Natural killer cell (primary cell): ENCODE measurements at regions of chr10 and their contacts with region 1.

Region 1: DNA sequence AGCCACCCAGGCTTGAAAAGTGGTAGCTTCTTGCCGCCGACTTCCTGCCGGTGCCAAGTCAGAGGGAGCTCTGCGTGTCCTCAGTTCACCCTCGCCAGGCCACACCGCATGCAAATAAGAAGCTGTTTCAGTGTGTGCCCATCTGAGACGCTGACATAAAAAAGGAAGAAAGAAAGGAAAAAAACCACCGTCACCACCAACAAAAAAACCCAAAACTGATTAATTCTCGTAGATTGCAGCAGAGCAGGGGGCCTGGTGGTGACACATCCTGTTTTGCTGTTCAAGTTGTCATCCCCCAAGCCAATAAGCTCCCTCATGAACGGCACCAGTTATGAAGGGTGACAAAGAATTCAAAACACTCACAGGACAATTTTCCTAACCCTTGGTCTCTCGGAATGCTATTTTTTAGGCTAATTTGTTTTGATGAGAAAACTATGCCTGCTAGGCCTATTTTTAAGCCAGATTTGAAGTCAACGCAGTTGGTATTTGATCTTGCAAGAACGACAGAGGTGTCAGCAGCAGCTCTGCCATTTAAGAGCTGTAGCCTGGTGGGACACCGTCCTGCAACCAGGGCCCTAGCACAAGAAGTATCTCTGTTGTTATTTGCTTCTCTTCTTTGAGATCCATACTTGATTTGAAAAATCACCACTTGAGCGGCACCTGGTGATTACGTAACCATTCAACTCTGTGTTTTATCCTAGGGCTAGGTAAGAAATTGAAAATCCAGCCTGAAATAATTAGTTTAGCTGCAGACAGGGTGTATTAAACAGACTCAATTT is 145.6 kb downstream of the PFKFB3 start:
- DNase-seq: peak; percentile 55 to 95
- ATAC-seq: peak; percentile 88 to 92 (median 90)
- H3K4me3 ChIP-seq: no peak overlapping the region
- H3K4me3 Mint-ChIP-seq: peak overlapping the region; percentile 84
- H3K27ac ChIP-seq: peak overlapping the region; percentile 78
- H3K27ac Mint-ChIP-seq: peak overlapping the region; percentile 92 to 93
- H3K4me1 ChIP-seq: peaks cover 23% of the 10 kb centered on the region
- H3K4me1 Mint-ChIP-seq: peaks cover 27 to 32% of the 10 kb centered on the region in 2 donors
- H3K27me3 ChIP-seq: no peaks in the 10 kb centered on the region
- H3K27me3 Mint-ChIP-seq: no peaks in the 10 kb centered on the region
- CTCF ChIP-seq: no peak

Region 2: DNA sequence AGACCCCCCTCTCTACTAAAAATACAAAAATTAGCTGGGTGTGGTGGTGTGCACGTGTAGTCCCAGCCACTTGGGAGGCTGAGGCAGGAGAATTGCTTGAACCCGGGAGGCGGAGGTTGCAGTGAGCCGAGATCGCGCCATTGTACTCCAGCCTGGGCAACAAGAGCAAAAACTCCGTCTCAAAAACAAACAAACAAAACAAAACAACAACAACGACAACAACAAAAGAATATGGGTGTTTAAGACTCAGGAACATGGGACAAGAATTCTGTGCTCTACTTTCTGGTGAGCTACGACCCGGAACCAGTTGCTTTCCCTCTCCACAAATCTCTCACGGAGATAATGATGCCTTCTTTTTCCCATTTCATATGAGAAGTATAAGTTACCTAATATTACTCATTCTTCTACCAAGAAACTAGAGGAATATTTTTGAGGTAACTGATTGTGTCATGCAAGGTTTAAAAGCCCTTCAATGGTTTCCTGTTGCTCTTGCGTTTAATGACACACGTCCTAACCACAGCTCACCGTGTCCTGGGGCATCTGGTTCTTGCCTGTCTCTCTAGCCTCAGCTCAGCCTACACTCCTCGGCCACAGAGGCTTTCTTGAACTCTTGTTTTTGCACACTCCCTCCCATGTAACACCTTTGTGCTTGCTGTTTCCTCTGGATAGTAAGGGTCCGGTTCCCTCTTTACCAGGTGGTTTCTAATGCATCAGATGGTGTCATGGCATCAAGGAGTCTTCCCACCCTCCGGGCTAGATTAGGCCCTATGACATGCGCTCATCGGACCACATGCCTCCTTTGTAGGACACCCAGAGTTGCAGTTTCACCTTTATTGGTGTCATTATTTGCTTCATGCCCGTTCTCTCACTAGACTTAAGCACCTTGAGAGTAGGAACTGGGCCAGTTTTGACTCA is 78.1 kb before region 1 on chr10:
- intact Hi-C with region 1: loop called (anchors 2 kb)
- DNase-seq: peak; percentile 49 to 88
- ATAC-seq: peak; percentile 63 to 81 (median 78)
- H3K4me3 ChIP-seq: no peak overlapping the region
- H3K4me3 Mint-ChIP-seq: peak overlapping the region; percentile 55
- H3K27ac ChIP-seq: peak overlapping the region; percentile 78
- H3K27ac Mint-ChIP-seq: peak overlapping the region; percentile 86 to 90
- H3K4me1 ChIP-seq: peaks cover 42% of the 10 kb centered on the region
- H3K4me1 Mint-ChIP-seq: peaks cover 32 to 36% of the 10 kb centered on the region in 2 donors
- H3K27me3 ChIP-seq: no peaks in the 10 kb centered on the region
- H3K27me3 Mint-ChIP-seq: no peaks in the 10 kb centered on the region
- CTCF ChIP-seq: no peak

Region 3: DNA sequence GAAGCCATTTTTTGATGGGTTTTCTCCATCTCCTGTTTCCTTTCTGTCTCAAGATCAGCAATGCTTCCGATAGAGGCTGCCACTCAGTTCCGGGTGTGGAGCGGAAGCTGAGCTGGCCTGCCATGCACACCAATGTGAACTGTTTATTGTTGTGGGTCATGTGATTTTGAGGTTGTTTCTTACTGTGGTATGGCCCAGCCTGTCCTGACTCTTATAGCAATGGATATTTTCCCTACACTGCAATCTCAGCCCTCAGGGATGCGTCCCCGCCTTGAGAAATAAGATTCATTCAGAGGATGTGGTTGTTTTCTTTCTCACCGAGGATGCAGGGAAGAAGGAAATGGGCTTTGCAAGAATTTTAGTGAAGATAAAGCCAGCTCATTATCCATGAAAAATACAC is 10.9 kb before region 1 on chr10:
- intact Hi-C with region 1: no loop called
- DNase-seq: no peak
- ATAC-seq: no peak
- H3K4me3 ChIP-seq: no peak overlapping the region
- H3K4me3 Mint-ChIP-seq: no peak overlapping the region
- H3K27ac ChIP-seq: no peak overlapping the region
- H3K27ac Mint-ChIP-seq: no peak overlapping the region
- H3K4me1 ChIP-seq: no peaks in the 10 kb centered on the region
- H3K4me1 Mint-ChIP-seq: no peaks in the 10 kb centered on the region
- H3K27me3 ChIP-seq: no peaks in the 10 kb centered on the region
- H3K27me3 Mint-ChIP-seq: peaks cover 0 to 2% of the 10 kb centered on the region in 2 donors
- CTCF ChIP-seq: no peak

Region 4: GRCh38 chr10:6423004-6423403 is 74.7 kb after region 1 on chr10:
- intact Hi-C with region 1: no loop called
- DNase-seq: no peak
- ATAC-seq: no peak
- H3K4me3 ChIP-seq: no peak overlapping the region
- H3K4me3 Mint-ChIP-seq: no peak overlapping the region
- H3K27ac ChIP-seq: no peak overlapping the region
- H3K27ac Mint-ChIP-seq: peak overlapping the region; percentile 65 to 71
- H3K4me1 ChIP-seq: no peaks in the 10 kb centered on the region
- H3K4me1 Mint-ChIP-seq: peaks cover 7 to 16% of the 10 kb centered on the region in 2 donors
- H3K27me3 ChIP-seq: no peaks in the 10 kb centered on the region
- H3K27me3 Mint-ChIP-seq: no peaks in the 10 kb centered on the region
- CTCF ChIP-seq: no peak

Region 5: DNA sequence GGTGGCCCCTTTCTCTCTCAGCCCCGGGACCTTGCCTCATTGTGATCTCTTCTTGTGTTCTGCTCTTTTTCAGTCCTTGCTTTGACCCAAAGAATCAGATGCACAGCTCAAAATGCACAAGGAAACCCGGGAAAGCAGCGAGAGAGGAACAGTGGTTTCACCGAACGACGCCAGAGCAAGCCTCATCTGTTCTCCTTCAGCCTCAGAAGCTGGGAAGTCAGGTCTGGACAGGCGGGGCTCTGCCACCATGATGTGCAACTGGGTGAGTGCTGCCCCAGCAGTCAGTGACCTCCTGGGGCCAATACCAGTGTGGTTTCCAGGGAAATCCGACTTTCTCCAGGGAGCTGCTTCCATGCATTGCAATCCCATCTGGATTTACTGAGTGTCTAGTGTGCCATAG is 98.4 kb after region 1 on chr10:
- intact Hi-C with region 1: no loop called
- DNase-seq: no peak
- ATAC-seq: no peak
- H3K4me3 ChIP-seq: no peak overlapping the region
- H3K4me3 Mint-ChIP-seq: no peak overlapping the region
- H3K27ac ChIP-seq: no peak overlapping the region
- H3K27ac Mint-ChIP-seq: peak overlapping the region in 1 of 2 donors; percentile 86
- H3K4me1 ChIP-seq: peaks cover 4% of the 10 kb centered on the region
- H3K4me1 Mint-ChIP-seq: peaks cover 32 to 36% of the 10 kb centered on the region in 2 donors
- H3K27me3 ChIP-seq: no peaks in the 10 kb centered on the region
- H3K27me3 Mint-ChIP-seq: no peaks in the 10 kb centered on the region
- CTCF ChIP-seq: no peak